ENCODE measurements at regions of chr2 and their contacts with region 1.

Region 1: DNA sequence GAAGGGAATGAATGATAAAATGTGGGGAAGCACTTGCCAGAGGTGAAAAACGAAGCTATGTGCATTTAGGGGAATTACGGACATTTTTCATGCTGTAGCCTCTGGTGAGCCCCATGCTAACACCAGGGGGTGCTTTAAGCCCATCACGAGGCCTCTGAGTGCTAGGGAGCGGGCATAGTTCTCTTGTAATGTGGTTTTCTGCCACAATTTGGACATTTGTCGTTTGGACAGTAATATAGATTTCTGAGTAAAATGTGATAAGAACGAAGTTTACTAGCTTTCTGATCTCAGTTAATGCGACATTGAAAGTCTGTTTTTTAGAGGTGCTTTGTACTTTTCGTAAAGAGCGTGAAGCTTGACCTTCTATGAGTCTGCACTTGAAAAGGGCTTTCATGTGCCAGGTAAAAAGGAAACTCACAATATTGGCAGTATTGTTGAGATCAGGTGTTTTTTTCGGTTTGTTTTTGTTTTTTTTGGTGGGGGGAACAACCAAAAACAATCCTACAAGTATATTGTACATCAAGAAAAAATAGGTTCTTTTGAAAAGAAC is 50.6 kb downstream of the TRAF3IP1 start:
- DNase-seq: peak in 33 of 35 experiments; percentile 16 to 71 (median 44)
- ATAC-seq: peak; percentile 55 to 71 (median 67)
- H3K4me3 ChIP-seq: no peak overlapping the region
- H3K4me3 Mint-ChIP-seq: no peak overlapping the region
- H3K27ac ChIP-seq: no peak overlapping the region
- H3K27ac Mint-ChIP-seq: no peak overlapping the region
- H3K4me1 ChIP-seq: peaks cover 0 to 4% of the 10 kb centered on the region in 2 experiments
- H3K4me1 Mint-ChIP-seq: peaks cover 6 to 15% (median 8%) of the 10 kb centered on the region in 3 donors
- H3K27me3 ChIP-seq: no peaks in the 10 kb centered on the region
- H3K27me3 Mint-ChIP-seq: no peaks in the 10 kb centered on the region

Region 2: DNA sequence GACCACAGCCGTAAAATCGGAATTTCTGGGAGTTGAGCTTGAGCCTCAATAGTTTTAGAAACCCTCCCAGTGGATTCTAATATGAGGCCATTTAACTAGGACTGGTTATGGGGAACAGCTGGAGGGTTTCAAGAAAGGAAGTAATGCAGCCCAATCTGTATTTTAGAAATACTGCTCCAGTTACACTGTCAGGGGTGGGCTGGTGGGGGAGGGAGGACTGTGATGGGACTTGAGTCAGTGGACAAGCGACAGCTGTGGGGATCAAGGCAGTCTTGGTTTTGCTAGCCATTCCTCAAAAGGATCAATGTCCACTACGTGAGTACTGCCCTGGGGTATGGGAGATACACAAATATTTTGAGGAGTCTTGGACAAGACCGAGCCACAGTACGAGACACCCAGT is 90.6 kb after region 1 on chr2:
- CTCF ChIA-PET with region 1: interaction called, 3 to 10 read pairs
- POLR2A ChIA-PET with region 1: no interaction called
- DNase-seq: no peak
- ATAC-seq: no peak
- H3K4me3 ChIP-seq: no peak overlapping the region
- H3K4me3 Mint-ChIP-seq: no peak overlapping the region
- H3K27ac ChIP-seq: no peak overlapping the region
- H3K27ac Mint-ChIP-seq: no peak overlapping the region
- H3K4me1 ChIP-seq: no peaks in the 10 kb centered on the region
- H3K4me1 Mint-ChIP-seq: peaks cover 0 to 3% (median 0%) of the 10 kb centered on the region in 3 donors
- H3K27me3 ChIP-seq: peaks cover 0 to 7% of the 10 kb centered on the region in 2 experiments
- H3K27me3 Mint-ChIP-seq: no peaks in the 10 kb centered on the region

Measured in T-cell (primary cell).